Dorsolateral prefrontal cortex (tissue), 120 donors: ENCODE measurements at regions of chr12 and their contacts with region 1.

Region 1: DNA sequence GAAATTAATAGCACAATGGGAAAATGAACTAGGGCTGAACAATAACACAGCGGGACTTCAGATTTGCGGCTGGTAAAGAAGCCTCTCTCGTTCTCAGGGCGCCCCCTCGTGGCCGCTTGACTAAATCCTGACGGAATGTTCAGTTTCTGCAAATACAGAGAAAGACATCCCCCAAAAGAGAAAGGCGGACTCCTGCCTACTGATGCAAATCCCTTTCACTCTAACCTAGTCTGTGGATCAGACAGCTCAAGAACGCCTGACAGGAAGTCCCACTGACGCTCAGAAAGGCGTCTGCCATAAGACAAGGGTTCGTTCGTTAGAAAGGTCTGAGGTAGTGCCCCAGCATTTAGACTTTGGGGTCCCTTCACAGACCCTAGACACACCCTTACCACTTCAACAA is 2.5 kb downstream of the NUAK1 start:
- DNase-seq: peak; percentile 87 to 96 (median 94)
- H3K4me3 ChIP-seq: peak overlapping the region; percentile 70 to 98 (median 90)
- H3K27ac ChIP-seq: peak overlapping the region; percentile 88 to 100 (median 99)
- H3K27me3 ChIP-seq: no peaks in the 10 kb centered on the region
- CTCF ChIP-seq: peak; percentile 85 to 98 (median 92)

Region 2: GRCh38 chr12:105705765-105706164 is 430.5 kb before region 1 on chr12:
- intact Hi-C with region 1: loop called (anchors 5 kb)
- DNase-seq: peak in 5 of 10 donors; percentile 38 to 71 (median 48)
- H3K4me3 ChIP-seq: no peak overlapping the region
- H3K27ac ChIP-seq: peak overlapping the region in 29 of 59 donors; percentile 1 to 71 (median 33)
- H3K27me3 ChIP-seq: no peaks in the 10 kb centered on the region
- CTCF ChIP-seq: peak; percentile 56 to 90 (median 80)

Region 3: GRCh38 chr12:105922670-105923102 is 213.6 kb before region 1 on chr12:
- intact Hi-C with region 1: loop called in 1 of 2 experiments (anchors 5 kb)
- DNase-seq: peak in 1 of 10 donors; percentile 24
- H3K4me3 ChIP-seq: no peak overlapping the region
- H3K27ac ChIP-seq: peak overlapping the region in 46 of 59 donors; percentile 1 to 81 (median 54)
- H3K27me3 ChIP-seq: no peaks in the 10 kb centered on the region
- CTCF ChIP-seq: no peak

Region 4: GRCh38 chr12:106084014-106084671 is 52.1 kb before region 1 on chr12:
- intact Hi-C with region 1: loop called (anchors 2 to 5 kb)
- DNase-seq: no peak
- H3K4me3 ChIP-seq: peak overlapping the region in 29 of 59 donors; percentile 0 to 40 (median 16)
- H3K27ac ChIP-seq: peak overlapping the region; percentile 71 to 100 (median 97)
- H3K27me3 ChIP-seq: no peaks in the 10 kb centered on the region
- CTCF ChIP-seq: no peak

Region 5: GRCh38 chr12:106179086-106179485 is 42.8 kb after region 1 on chr12:
- intact Hi-C with region 1: no loop called
- DNase-seq: no peak
- H3K4me3 ChIP-seq: no peak overlapping the region
- H3K27ac ChIP-seq: no peak overlapping the region
- H3K27me3 ChIP-seq: no peaks in the 10 kb centered on the region
- CTCF ChIP-seq: no peak

Region 6: GRCh38 chr12:106302401-106303201 is 166.3 kb after region 1 on chr12 and contains the start of gene TCP11L2:
- intact Hi-C with region 1: loop called (anchors 5 to 10 kb)
- DNase-seq: peak; percentile 85 to 93 (median 90)
- H3K4me3 ChIP-seq: peak within 1 kb of the TSS; percentile 66 to 100 (median 93)
- H3K27ac ChIP-seq: peak within 1 kb of the TSS; percentile 88 to 100 (median 98)
- H3K27me3 ChIP-seq: no peaks in the 10 kb centered on the region
- CTCF ChIP-seq: no peak
- total RNA-seq, gene TCP11L2: 20.9 to 141 (median 42.8) TPM

Region 7: DNA sequence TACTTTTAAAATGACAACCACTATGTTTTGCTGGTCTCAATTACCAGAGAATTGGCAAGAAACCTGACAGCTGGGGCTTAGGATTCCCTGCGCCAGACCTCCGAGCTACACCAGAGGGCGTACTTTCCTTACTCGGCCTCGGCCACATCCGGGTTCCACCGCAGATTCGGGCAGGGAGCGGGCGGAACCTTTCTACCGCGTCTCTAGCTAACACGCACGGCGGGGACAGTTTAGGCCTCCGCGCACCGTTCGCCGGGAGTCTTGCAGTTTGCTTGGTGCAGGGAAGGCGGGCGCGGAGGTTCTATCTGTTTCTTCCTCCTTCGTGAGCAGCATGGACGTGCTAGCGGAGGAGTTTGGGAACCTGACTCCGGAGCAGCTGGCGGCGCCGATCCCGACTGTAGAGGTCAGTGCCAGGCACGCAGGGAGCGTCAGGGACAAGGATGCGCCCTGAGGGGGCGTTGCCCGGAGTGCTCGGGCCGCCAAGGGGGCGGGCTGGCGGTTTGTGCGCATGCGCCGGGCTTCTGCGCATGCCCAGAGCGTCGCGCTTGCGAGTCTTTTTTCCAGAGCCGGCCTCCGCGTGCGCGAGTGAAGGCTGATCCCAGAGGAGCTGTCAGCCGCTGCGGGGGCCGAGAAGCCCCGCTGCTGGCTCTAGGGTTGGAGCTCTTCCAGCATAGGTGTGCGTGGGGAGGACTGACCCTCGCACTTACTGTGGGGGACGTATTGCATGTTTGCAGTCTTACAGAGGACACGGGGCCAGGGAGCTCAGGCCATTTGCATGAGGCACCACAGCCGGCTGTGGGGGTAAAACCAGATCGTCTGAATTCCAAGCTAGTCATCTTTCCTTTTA is 221.5 kb after region 1 on chr12 and contains the start of gene POLR3B:
- intact Hi-C with region 1: loop called in 1 of 2 experiments (anchors 10 kb)
- DNase-seq: peak; percentile 92 to 96 (median 94)
- H3K4me3 ChIP-seq: peak within 1 kb of the TSS; percentile 39 to 96 (median 82)
- H3K27ac ChIP-seq: peak within 1 kb of the TSS; percentile 83 to 100 (median 99)
- H3K27me3 ChIP-seq: no peaks in the 10 kb centered on the region
- CTCF ChIP-seq: peak; percentile 81 to 98 (median 93)
- total RNA-seq, gene POLR3B: 7.5 to 25.1 (median 12.6) TPM